ENCODE measurements at regions of chr6 and their contacts with region 1.

Region 1: DNA sequence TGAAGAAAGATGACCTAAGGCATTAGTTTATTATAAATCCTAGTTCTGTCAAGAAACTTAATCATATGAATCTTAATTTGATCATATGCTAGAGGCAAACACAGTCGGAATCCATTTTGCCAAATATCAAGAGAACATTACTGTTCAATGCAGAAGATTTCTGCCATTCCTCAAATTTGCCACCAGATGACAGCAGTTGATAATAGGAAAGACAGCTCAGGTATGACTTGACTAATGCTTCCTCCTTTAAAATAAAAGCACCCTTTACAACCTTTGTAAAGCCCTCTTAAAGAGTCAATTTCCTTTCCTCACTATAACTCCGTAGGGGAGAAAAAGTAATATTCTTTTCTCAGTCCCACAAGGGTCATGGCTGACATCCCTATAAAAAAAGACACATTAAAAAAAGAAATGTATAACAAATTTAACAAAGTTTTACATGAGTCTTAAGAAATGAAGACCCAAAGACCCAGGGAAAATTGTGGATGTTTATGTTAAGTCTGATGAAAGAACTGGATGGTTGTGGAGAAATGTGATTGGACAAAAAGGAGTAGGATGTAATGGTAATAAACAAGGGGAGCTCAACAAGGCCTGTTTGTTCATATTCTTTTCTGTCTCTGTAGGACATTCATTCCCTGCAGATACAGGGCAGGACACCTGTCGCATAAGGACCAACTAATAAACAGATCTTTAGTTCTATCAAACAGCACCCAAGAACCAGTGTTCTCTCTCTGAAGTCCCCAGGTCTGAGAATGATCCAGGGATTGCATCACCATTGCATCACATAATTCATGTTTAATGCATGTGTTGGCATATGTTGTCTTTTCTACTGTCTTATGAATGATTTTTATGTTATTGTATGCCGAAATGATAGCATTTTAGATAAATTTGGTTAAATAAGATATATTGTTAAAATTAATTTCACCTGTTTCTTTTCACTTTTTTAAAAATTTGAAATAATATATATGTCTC is 23.0 kb upstream of the IL17A start:
- DNase-seq: no peak
- ATAC-seq: no peak
- H3K4me3 ChIP-seq: no peak overlapping the region
- H3K27ac ChIP-seq: no peak overlapping the region
- H3K4me1 ChIP-seq: no peaks in the 10 kb centered on the region
- H3K27me3 ChIP-seq: peaks cover 0 to 18% (median 0%) of the 10 kb centered on the region in 7 donors
- CTCF ChIP-seq: peak in 7 of 9 donors; percentile 43 to 61 (median 54)

Region 2: GRCh38 chr6:52077180-52077884 is 85.9 kb before region 1 on chr6:
- intact Hi-C with region 1: no loop called
- DNase-seq: no peak
- ATAC-seq: no peak
- H3K4me3 ChIP-seq: no peak overlapping the region
- H3K27ac ChIP-seq: no peak overlapping the region
- H3K4me1 ChIP-seq: no peaks in the 10 kb centered on the region
- H3K27me3 ChIP-seq: peaks cover 0 to 61% (median 0%) of the 10 kb centered on the region in 7 donors
- CTCF ChIP-seq: no peak

Region 3: GRCh38 chr6:52233975-52234823 is 71.0 kb after region 1 on chr6:
- intact Hi-C with region 1: loop called in 4 of 10 experiments (anchors 2 to 10 kb)
- DNase-seq: no peak
- ATAC-seq: peak in 3 of 8 donors; percentile 33 to 49 (median 49)
- H3K4me3 ChIP-seq: no peak overlapping the region
- H3K27ac ChIP-seq: no peak overlapping the region
- H3K4me1 ChIP-seq: no peaks in the 10 kb centered on the region
- H3K27me3 ChIP-seq: peaks cover 0 to 9% (median 0%) of the 10 kb centered on the region in 7 donors
- CTCF ChIP-seq: peak in 8 of 9 donors; percentile 12 to 56 (median 50)

Region 4: GRCh38 chr6:52263709-52264540 is 100.7 kb after region 1 on chr6:
- intact Hi-C with region 1: loop called in 3 of 10 experiments (anchors 5 to 10 kb)
- DNase-seq: peak; percentile 33 to 49
- ATAC-seq: peak in 6 of 8 donors; percentile 56 to 72 (median 65)
- H3K4me3 ChIP-seq: no peak overlapping the region
- H3K27ac ChIP-seq: no peak overlapping the region
- H3K4me1 ChIP-seq: no peaks in the 10 kb centered on the region
- H3K27me3 ChIP-seq: no peaks in the 10 kb centered on the region
- CTCF ChIP-seq: peak; percentile 76 to 96 (median 92)